Esophagus squamous epithelium (tissue), 5 donors: ENCODE measurements at regions of chr6 and their contacts with region 1.

Region 1: GRCh38 chr6:75266716-75267291 is 17.8 kb downstream of the TMEM30A start:
- DNase-seq: no peak
- H3K4me3 ChIP-seq: no peak overlapping the region
- H3K27ac ChIP-seq: no peak overlapping the region
- H3K4me1 ChIP-seq: peaks cover 5 to 32% (median 9%) of the 10 kb centered on the region in 3 donors
- H3K27me3 ChIP-seq: no peaks in the 10 kb centered on the region
- CTCF ChIP-seq: peak; percentile 50 to 90 (median 80)
- POLR2A ChIP-seq: no peak

Region 2: GRCh38 chr6:74826263-74826662 is 440.5 kb before region 1 on chr6:
- intact Hi-C with region 1: no loop called
- DNase-seq: no peak
- H3K4me3 ChIP-seq: no peak overlapping the region
- H3K27ac ChIP-seq: no peak overlapping the region
- H3K4me1 ChIP-seq: no peaks in the 10 kb centered on the region
- H3K27me3 ChIP-seq: no peaks in the 10 kb centered on the region
- CTCF ChIP-seq: no peak
- POLR2A ChIP-seq: no peak

Region 3: DNA sequence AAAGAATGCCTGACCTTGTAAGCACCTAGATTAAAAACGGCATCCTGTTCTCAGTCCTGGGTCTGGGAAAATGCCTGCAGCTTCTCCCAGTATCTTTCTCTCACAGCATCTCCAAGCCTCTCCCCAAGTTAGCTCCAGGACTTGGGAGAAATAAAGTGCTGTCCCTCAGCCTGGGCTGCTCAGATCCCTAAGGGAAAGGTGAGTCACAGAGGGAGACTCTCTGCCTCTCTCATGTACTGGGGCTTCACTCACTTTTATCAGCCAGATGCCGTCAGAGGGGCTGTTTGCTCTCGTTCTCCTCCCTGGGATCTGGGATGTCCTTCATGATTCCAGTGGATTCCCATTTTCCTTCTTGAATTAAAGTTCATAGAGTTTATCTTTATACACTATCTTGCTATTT is 354.6 kb before region 1 on chr6:
- intact Hi-C with region 1: no loop called
- DNase-seq: no peak
- H3K4me3 ChIP-seq: no peak overlapping the region
- H3K27ac ChIP-seq: no peak overlapping the region
- H3K4me1 ChIP-seq: no peaks in the 10 kb centered on the region
- H3K27me3 ChIP-seq: no peaks in the 10 kb centered on the region
- CTCF ChIP-seq: no peak
- POLR2A ChIP-seq: no peak

Region 4: DNA sequence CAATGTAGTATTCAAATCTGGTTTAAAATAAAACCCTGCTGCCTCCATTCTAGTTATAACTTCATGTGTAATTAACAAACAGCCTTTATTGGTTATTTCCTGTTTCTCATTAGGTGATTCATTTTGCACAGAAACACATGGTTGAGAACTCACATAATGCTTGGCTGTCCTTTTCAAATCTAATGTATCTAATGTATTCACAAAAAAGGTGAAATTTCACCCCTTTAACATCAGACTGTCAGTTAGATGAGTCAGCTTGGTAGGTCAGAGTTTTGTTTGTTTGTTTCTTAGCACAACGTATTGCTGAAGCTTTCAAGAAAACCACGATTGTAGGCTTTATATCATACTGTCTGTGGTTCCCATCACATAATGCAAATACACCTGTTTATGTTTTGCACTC is 96.5 kb after region 1 on chr6:
- intact Hi-C with region 1: no loop called
- DNase-seq: no peak
- H3K4me3 ChIP-seq: no peak overlapping the region
- H3K27ac ChIP-seq: no peak overlapping the region
- H3K4me1 ChIP-seq: peaks cover 0 to 3% (median 0%) of the 10 kb centered on the region in 3 donors
- H3K27me3 ChIP-seq: no peaks in the 10 kb centered on the region
- CTCF ChIP-seq: no peak
- POLR2A ChIP-seq: no peak

Region 5: GRCh38 chr6:75532515-75532914 is 265.7 kb after region 1 on chr6:
- intact Hi-C with region 1: loop called (anchors 10 kb)
- DNase-seq: no peak
- H3K4me3 ChIP-seq: no peak overlapping the region
- H3K27ac ChIP-seq: no peak overlapping the region
- H3K4me1 ChIP-seq: peaks cover 0 to 9% (median 0%) of the 10 kb centered on the region in 3 donors
- H3K27me3 ChIP-seq: no peaks in the 10 kb centered on the region
- CTCF ChIP-seq: no peak
- POLR2A ChIP-seq: no peak